ENCODE measurements at regions of chr22 and their contacts with region 1.

Region 1: GRCh38 chr22:23716811-23717801 is 26.3 kb downstream of the RGL4 start:
- DNase-seq: peak; percentile 85 to 93 (median 89)
- ATAC-seq: peak; percentile 93 to 97 (median 97)
- H3K4me3 ChIP-seq: peak overlapping the region; percentile 57 to 95 (median 83)
- H3K27ac ChIP-seq: peak overlapping the region in 11 of 12 donors; percentile 23 to 82 (median 70)
- H3K4me1 ChIP-seq: peaks cover 0 to 19% (median 10%) of the 10 kb centered on the region in 12 donors
- H3K27me3 ChIP-seq: no peaks in the 10 kb centered on the region
- CTCF ChIP-seq: no peak
- POLR2A ChIP-seq: peak in 1 of 2 donors; percentile 92

Region 2: GRCh38 chr22:23742505-23743264 is 25.6 kb after region 1 on chr22:
- intact Hi-C with region 1: loop called in 1 of 10 experiments (anchors 1 kb)
- DNase-seq: peak in 3 of 5 donors; percentile 49 to 68 (median 64)
- ATAC-seq: peak; percentile 83 to 94 (median 92)
- H3K4me3 ChIP-seq: no peak overlapping the region
- H3K27ac ChIP-seq: peak overlapping the region in 4 of 12 donors; percentile 24 to 37 (median 30)
- H3K4me1 ChIP-seq: peaks cover 0 to 17% (median 7%) of the 10 kb centered on the region in 12 donors
- H3K27me3 ChIP-seq: no peaks in the 10 kb centered on the region
- CTCF ChIP-seq: no peak
- POLR2A ChIP-seq: no peak

Region 3: GRCh38 chr22:23750714-23751440 is 33.8 kb after region 1 on chr22 and contains the start of gene ZNF70:
- intact Hi-C with region 1: loop called in 1 of 10 experiments (anchors 5 kb)
- DNase-seq: peak; percentile 86 to 93 (median 87)
- ATAC-seq: peak; percentile 78 to 96 (median 91)
- H3K4me3 ChIP-seq: peak within 1 kb of the TSS; percentile 46 to 81 (median 71)
- H3K27ac ChIP-seq: peak within 1 kb of the TSS; percentile 63 to 92 (median 86)
- H3K4me1 ChIP-seq: peaks cover 0 to 22% (median 8%) of the 10 kb centered on the region in 12 donors
- H3K27me3 ChIP-seq: no peaks in the 10 kb centered on the region
- CTCF ChIP-seq: peak in 4 of 12 donors; percentile 5 to 37 (median 32)
- POLR2A ChIP-seq: peak in 1 of 2 donors; percentile 55
- total RNA-seq, gene ZNF70: 2.7 to 4.6 (median 3.3) TPM